Activated CD4-positive, alpha-beta T cell treated with anti-CD3 and anti-CD28 coated beads, Interleukin-2, amount 10 ng/mL, durations not matched to agents 24 days and 14 days (primary cell): ENCODE measurements at regions of chr14 and their contacts with region 1.

Region 1: DNA sequence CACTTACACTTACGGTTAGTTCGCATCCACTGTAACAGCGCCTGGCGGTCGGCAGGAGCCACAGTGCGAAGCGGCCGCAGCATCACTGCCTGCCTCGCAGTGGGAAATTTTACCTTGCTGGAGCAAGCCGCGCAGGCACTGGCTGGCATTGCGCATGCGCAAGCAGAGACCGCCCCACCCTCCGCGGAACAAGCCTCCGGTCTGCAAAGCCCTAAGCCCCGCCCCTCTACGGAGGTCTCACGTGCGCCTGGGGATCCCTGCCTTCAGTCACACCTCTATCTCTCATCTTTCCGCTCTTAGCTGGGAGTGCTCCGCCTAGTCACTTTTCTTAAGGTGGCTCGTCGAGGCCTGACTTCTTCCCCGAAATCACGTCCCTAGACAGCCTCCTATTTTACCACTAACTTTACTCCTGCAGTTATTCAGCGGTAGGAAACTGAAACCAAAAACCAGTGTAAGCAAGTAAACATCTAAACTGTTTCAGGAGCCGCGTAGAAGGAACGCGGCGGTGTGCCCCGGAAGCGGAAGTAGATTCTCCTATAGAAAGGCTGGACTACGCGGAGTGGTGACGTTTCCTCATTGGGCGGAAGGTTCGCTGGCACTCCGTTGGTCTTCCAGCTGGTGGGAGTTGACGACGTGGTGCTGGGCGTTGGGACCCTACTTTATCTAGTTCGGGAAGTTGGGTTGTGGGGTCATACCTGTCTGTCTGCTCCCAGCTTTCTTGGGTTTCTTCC is at the start of gene SRP54:
- DNase-seq: peak; percentile 100
- H3K4me3 Mint-ChIP-seq: no peak within 1 kb of the TSS
- H3K27ac Mint-ChIP-seq: no peak within 1 kb of the TSS
- H3K4me1 Mint-ChIP-seq: peaks cover 17% of the 10 kb centered on the region
- H3K27me3 Mint-ChIP-seq: no peaks in the 10 kb centered on the region
- total RNA-seq, gene SRP54: 73.6 and 73.8 TPM in 2 replicates

Region 2: GRCh38 chr14:34843011-34843554 is 139.5 kb before region 1 on chr14:
- intact Hi-C with region 1: loop called (anchors 1 kb)
- DNase-seq: peak; percentile 59
- H3K4me3 Mint-ChIP-seq: peak overlapping the region; percentile 15
- H3K27ac Mint-ChIP-seq: peak overlapping the region; percentile 69
- H3K4me1 Mint-ChIP-seq: peaks cover 9% of the 10 kb centered on the region
- H3K27me3 Mint-ChIP-seq: no peaks in the 10 kb centered on the region

Region 3: GRCh38 chr14:34931206-34931605 is 51.4 kb before region 1 on chr14:
- intact Hi-C with region 1: loop called (anchors 2 kb)
- DNase-seq: peak; percentile 80
- H3K4me3 Mint-ChIP-seq: peak overlapping the region; percentile 64
- H3K27ac Mint-ChIP-seq: peak overlapping the region; percentile 87
- H3K4me1 Mint-ChIP-seq: peaks cover 28% of the 10 kb centered on the region
- H3K27me3 Mint-ChIP-seq: no peaks in the 10 kb centered on the region

Region 4: DNA sequence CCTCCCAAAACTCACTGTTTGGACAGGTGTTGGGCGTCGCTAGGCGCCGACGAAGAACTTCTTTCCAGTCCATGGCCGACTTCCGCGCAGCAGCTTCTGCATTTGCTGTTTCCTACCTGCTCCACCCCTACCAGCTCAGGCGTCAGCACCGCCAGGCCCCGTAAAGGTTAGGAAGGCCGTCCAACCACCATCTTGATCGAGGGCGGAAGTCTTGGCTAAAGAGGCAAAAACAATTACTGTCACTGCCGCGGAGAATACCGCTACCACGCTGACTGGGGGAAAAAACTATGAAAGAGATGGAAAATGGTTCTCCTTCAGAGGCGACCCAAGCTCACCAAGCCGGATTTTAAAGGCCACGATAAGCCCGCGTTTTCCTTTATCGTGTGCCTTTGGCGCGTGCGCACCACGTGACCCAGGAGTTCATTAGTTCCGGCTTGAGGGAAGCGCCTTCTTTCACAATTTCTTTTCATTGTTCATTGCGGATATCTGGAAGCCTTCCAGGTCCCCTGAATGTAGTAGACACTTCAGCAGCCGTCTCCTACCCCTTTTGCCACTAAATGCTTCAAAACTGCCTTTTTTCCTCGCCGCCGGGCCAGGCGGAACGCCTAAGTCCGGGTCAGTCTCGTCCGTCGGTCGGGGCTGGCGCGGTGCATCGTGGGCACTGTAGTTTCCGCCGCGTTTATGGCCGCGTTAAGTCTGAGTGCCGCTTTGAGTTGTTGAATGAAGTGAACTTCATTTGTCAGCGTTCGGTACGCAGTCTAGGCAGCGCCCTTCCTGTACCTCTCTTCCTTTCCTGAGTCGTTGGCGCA is 139.5 kb after region 1 on chr14 and contains the starts of genes PPP2R3C and PRORP:
- intact Hi-C with region 1: loop called (anchors 1 kb)
- DNase-seq: peak; percentile 97
- H3K4me3 Mint-ChIP-seq: peak within 1 kb of the TSS; percentile 82
- H3K27ac Mint-ChIP-seq: peak within 1 kb of the TSS; percentile 100
- H3K4me1 Mint-ChIP-seq: peaks cover 56% of the 10 kb centered on the region
- H3K27me3 Mint-ChIP-seq: no peaks in the 10 kb centered on the region
- total RNA-seq, gene PPP2R3C: 51.6 and 58.1 TPM in 2 replicates
- total RNA-seq, gene PRORP: 35.6 and 41.1 TPM in 2 replicates

Region 5: GRCh38 chr14:35808076-35808652 is 825.6 kb after region 1 on chr14:
- intact Hi-C with region 1: loop called (anchors 5 kb)
- DNase-seq: peak; percentile 70
- H3K4me3 Mint-ChIP-seq: peak overlapping the region; percentile 99
- H3K27ac Mint-ChIP-seq: peak overlapping the region; percentile 95
- H3K4me1 Mint-ChIP-seq: peaks cover 20% of the 10 kb centered on the region
- H3K27me3 Mint-ChIP-seq: peaks cover 1% of the 10 kb centered on the region